ENCODE measurements at regions of chr4 and their contacts with region 1.

Region 1: DNA sequence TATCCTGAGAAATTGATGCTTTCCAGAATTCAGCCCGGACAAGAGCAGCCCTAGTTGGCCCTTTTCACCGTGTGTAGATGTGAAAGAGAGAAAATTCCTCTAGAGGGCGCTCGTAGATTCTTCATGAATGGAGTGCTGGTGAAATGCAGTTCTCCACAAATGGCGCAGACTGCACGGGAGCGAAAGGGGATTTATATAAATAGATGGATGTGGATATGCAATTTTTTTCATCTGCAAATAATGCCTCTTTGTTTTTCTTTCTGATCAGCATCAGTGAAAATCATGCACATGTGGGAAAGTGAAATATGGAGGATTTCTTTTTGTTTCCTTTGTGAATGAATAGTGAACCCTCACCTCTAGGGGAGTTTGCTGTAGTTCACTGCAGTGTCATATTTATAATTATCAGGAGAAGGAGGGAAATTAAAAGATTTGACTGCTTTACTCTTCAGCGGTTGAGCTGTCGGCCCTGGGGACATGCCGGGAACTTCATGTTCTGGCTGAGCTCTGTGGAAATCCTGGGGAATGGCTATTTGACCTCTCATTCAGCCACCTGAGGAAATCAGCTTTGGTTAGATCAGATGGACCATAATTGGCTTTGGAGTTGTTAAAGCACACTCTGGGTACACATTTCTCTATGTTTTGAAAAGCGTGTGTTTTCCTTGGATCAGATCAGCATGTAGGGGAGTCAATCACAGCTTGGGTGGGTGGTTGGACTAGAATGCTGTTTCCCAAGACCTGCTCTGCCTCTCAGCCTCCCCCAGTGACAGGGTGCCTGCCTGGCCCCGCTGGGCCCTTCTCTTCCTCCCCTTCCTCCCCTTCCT is 115.0 kb upstream of the SHISA3 start:
- DNase-seq: no peak
- ATAC-seq: peak; percentile 85 to 95 (median 92)
- H3K4me3 ChIP-seq: no peak overlapping the region
- H3K27ac ChIP-seq: no peak overlapping the region
- H3K4me1 ChIP-seq: peaks cover 0 to 6% (median 0%) of the 10 kb centered on the region in 4 donors
- H3K27me3 ChIP-seq: no peaks in the 10 kb centered on the region
- CTCF ChIP-seq: peak; percentile 52 to 74 (median 71)
- POLR2A ChIP-seq: no peak

Region 2: DNA sequence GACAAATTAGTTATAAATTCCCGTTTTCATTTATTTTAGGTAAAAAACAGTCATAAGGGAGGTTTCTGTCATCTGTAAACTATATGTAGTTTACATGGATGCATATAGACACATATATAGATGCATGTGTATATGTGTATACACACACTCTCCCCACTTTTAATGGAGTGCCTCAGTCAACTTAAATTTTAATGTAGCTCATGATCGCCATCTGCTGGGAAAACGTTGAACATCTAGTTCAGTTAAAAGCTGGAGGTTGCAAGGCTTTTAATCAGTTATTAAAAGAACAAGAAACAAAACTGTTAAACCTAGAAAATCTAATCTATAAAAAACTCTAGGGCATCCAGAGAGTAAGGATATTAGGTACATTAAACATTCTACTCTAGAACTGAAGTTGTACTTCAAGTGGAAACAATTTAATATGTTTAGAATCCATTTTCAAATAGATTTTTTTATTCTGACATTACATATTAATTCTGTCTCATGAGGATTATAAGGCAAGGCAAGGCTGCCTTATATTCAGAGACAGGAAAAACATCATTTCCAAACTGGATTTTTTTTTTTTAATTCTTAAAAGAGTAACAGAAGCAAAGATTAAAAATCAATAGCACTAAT is 237.6 kb after region 1 on chr4:
- intact Hi-C with region 1: loop called (anchors 10 kb)
- DNase-seq: no peak
- ATAC-seq: peak; percentile 59 to 76 (median 73)
- H3K4me3 ChIP-seq: no peak overlapping the region
- H3K27ac ChIP-seq: no peak overlapping the region
- H3K4me1 ChIP-seq: no peaks in the 10 kb centered on the region
- H3K27me3 ChIP-seq: no peaks in the 10 kb centered on the region
- CTCF ChIP-seq: peak; percentile 59 to 67 (median 64)
- POLR2A ChIP-seq: no peak